ENCODE measurements at regions of chr10 and their contacts with region 1.

Region 1: GRCh38 chr10:89643431-89644331 is 1.4 kb downstream of the PANK1 start:
- DNase-seq: peak; percentile 61 to 89
- H3K4me3 ChIP-seq: peak overlapping the region; percentile 92 to 97
- H3K27ac ChIP-seq: peak overlapping the region; percentile 72 to 91
- H3K4me1 ChIP-seq: no peaks in the 10 kb centered on the region
- H3K27me3 ChIP-seq: no peaks in the 10 kb centered on the region
- CTCF ChIP-seq: no peak

Region 2: DNA sequence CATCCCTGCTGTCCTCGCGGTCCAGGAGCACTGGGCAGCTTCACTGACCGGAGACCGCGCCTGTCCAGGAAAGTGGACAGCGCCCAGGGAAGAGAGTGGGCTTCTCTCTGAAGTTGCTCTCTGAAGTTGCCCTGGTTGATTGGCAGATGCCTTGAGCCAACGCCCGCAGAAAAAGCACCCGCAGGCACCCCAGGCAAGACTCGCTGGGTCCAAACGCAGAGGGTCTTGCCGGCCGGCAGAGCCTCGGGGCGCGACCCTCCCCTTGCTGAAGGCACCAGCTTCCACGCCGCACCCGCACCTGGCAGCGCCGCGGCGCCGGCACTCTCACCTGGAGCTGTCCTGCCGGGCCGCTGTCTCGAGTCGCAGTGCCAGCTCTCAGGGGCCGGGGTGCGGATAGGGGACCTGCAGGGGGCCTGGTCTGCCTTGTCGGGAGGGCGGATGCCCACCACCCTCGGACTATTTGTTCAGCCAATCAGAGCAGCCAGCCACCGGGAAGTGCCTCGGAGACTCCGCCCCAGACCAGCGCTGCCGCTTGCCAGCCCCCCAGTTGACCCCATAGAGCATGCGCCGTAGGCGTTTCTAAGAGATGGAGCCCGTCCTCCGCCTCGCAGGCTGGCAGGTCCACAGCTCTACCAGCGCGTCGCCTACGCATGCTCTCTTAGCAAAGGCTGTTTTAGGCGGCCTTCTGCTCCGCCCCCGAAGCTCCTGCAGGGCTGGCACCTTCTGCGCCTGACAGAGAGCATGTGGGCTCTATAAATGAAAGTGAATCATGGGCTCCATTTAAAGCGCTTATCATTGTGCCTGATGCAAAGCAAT is 392.1 kb before region 1 on chr10 and contains the start of gene LIPA:
- intact Hi-C with region 1: loop called (anchors 10 kb)
- DNase-seq: peak; percentile 91 to 98
- H3K4me3 ChIP-seq: peak within 1 kb of the TSS; percentile 85 to 87
- H3K27ac ChIP-seq: peak within 1 kb of the TSS; percentile 72 to 84
- H3K4me1 ChIP-seq: peaks cover 0 to 4% of the 10 kb centered on the region in 2 donors
- H3K27me3 ChIP-seq: no peaks in the 10 kb centered on the region
- CTCF ChIP-seq: no peak
- total RNA-seq, gene LIPA: 57.9 TPM

Region 3: GRCh38 chr10:89701238-89702120 is 57.8 kb after region 1 on chr10 and contains the start of gene KIF20B:
- intact Hi-C with region 1: loop called (anchors 2 kb)
- DNase-seq: peak; percentile 85 to 97
- H3K4me3 ChIP-seq: peak within 1 kb of the TSS; percentile 63 to 95
- H3K27ac ChIP-seq: peak within 1 kb of the TSS; percentile 66 to 83
- H3K4me1 ChIP-seq: peaks cover 2 to 9% of the 10 kb centered on the region in 2 donors
- H3K27me3 ChIP-seq: no peaks in the 10 kb centered on the region
- CTCF ChIP-seq: peak in 2 of 3 experiments; percentile 19 to 42
- total RNA-seq, gene KIF20B: 2.4 TPM

Region 4: GRCh38 chr10:89793649-89794254 is 150.1 kb after region 1 on chr10:
- intact Hi-C with region 1: no loop called
- DNase-seq: no peak
- H3K4me3 ChIP-seq: no peak overlapping the region
- H3K27ac ChIP-seq: no peak overlapping the region
- H3K4me1 ChIP-seq: no peaks in the 10 kb centered on the region
- H3K27me3 ChIP-seq: no peaks in the 10 kb centered on the region
- CTCF ChIP-seq: peak; percentile 66 to 80 (median 77)